Activated T-helper 2 cell treated with anti-CD3 and anti-CD28 coated beads, Interferon-gamma antibody, Interleukin-2, Interleukin-4, amounts not matched to agents 10 μg/mL and 5 μg/mL and 100 μg/mL, durations not matched to agents 14 hours and 24 hours and 36 hours (primary cell): ENCODE measurements at regions of chr10 and their contacts with region 1.

Region 1: GRCh38 chr10:59625721-59626522 is 83.7 kb downstream of the SLC16A9 start:
- DNase-seq: peak; percentile 31
- H3K4me3 Mint-ChIP-seq: no peak overlapping the region
- H3K27ac Mint-ChIP-seq: no peak overlapping the region
- H3K4me1 Mint-ChIP-seq: peaks cover 3% of the 10 kb centered on the region
- H3K27me3 Mint-ChIP-seq: peaks cover 16% of the 10 kb centered on the region

Region 2: GRCh38 chr10:58952747-58953466 is 673.0 kb before region 1 on chr10:
- intact Hi-C with region 1: loop called (anchors 1 kb)
- DNase-seq: no peak
- H3K4me3 Mint-ChIP-seq: no peak overlapping the region
- H3K27ac Mint-ChIP-seq: no peak overlapping the region
- H3K4me1 Mint-ChIP-seq: no peaks in the 10 kb centered on the region
- H3K27me3 Mint-ChIP-seq: no peaks in the 10 kb centered on the region

Region 3: GRCh38 chr10:59240582-59241183 is 385.2 kb before region 1 on chr10:
- intact Hi-C with region 1: loop called (anchors 5 kb)
- DNase-seq: no peak
- H3K4me3 Mint-ChIP-seq: no peak overlapping the region
- H3K27ac Mint-ChIP-seq: no peak overlapping the region
- H3K4me1 Mint-ChIP-seq: no peaks in the 10 kb centered on the region
- H3K27me3 Mint-ChIP-seq: no peaks in the 10 kb centered on the region

Region 4: DNA sequence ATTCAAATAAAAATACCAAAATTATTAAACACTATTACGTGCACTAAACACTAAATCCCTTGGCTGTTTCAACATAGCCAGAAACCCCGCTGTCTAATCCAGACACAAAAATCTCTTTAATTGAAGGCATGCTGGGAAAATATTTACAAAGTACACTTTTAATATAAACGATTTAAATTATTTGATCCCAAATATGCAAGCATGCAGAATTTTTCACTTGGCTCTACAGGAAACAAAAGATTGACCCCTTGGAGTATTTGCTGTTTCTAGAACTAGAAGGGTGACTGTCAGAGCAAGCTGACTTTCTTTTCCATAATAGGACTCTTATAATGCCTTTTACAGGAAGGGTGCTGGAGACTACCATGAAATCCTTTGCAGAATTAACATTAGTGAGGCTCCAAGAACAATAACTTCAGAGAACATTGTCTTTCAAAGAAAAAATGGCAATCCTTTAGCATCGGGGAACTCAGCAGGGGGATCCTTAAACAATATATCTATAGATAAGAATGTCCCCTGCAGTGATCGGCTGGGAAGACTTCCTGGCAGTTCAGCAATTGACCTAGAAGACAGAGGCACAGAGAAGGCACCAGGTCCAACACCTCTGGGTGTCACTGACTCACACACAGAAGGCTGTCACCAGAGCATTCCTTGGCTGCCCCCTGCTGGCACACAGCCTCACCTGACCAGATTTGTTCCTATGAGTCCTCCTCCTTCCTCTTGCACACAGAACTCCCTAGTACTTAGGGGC is 183.1 kb after region 1 on chr10:
- intact Hi-C with region 1: loop called (anchors 1 kb)
- DNase-seq: peak; percentile 53
- H3K4me3 Mint-ChIP-seq: no peak overlapping the region
- H3K27ac Mint-ChIP-seq: no peak overlapping the region
- H3K4me1 Mint-ChIP-seq: peaks cover 5% of the 10 kb centered on the region
- H3K27me3 Mint-ChIP-seq: no peaks in the 10 kb centered on the region

Region 5: DNA sequence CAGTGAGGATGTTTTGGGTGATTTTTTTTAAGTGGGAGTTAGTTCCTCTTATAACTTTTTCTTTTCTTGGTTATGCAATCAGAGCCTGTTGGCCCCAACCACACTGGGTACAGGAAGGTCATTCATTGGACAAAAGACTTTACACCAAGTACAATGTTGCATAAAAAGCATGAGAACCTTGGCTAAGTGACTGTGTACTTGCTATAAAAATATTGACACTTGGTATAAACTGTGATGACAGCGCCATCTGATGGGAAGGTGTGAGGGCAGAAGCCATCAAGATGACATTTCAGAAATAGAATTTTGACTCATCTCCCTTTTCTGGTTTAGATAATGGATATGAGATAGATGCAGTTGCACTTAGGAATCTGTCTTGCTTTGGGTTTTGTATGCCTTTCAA is 406.8 kb after region 1 on chr10:
- intact Hi-C with region 1: loop called (anchors 1 kb)
- DNase-seq: peak; percentile 20
- H3K4me3 Mint-ChIP-seq: no peak overlapping the region
- H3K27ac Mint-ChIP-seq: no peak overlapping the region
- H3K4me1 Mint-ChIP-seq: peaks cover 14% of the 10 kb centered on the region
- H3K27me3 Mint-ChIP-seq: no peaks in the 10 kb centered on the region

Region 6: DNA sequence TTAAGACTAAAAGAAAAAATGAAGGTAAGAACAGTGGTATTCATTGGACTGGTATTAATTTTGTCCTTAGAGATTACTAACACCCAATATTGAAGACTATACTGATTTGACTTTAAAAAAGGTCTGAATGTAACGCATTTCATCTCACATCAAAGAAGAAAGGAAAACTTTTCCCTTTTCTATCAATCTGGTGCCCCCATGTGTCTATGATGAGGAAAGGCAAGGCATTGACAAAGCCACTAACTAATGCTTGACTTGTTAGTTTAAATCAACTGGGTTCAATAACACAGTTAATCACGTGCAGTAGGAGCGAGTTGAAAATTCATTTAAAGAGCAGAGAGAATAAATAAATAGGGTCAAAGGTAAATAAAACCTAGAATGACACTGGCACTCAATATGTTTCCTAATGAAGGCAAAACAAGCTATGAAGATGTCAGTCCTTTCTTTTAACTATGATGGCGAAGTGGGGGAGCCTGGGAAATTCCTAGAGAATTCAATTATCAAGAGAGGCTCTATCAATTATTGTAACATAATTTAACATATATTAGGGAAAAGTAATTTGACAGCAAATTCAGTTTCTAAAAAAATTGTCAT is 582.9 kb after region 1 on chr10:
- intact Hi-C with region 1: loop called (anchors 2 kb)
- DNase-seq: no peak
- H3K4me3 Mint-ChIP-seq: no peak overlapping the region
- H3K27ac Mint-ChIP-seq: no peak overlapping the region
- H3K4me1 Mint-ChIP-seq: peaks cover 19% of the 10 kb centered on the region
- H3K27me3 Mint-ChIP-seq: no peaks in the 10 kb centered on the region

Region 7: GRCh38 chr10:60444494-60445064 is 818.7 kb after region 1 on chr10:
- intact Hi-C with region 1: loop called (anchors 10 kb)
- DNase-seq: no peak
- H3K4me3 Mint-ChIP-seq: no peak overlapping the region
- H3K27ac Mint-ChIP-seq: no peak overlapping the region
- H3K4me1 Mint-ChIP-seq: peaks cover 5% of the 10 kb centered on the region
- H3K27me3 Mint-ChIP-seq: no peaks in the 10 kb centered on the region